ENCODE measurements at regions of chr12 and their contacts with region 1.

Region 1: DNA sequence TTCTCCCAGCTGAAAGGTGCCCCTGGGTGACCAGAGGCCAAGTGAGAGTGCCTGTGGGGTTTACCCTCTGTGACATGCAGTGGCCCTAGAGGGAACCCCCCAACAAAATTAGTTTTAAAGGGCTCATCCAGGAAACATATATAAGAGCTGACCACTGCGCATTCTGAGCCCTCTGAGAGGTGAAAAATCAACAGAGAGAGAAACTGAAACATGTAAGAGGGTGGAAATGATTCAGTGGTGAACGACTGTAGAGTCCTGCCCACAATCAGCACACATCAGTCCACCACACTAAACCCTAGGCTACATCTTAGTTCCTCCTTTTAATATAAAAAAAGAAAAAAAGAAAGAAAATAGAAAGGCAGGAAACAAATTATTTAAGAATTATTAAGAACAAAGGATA is 21.0 kb upstream of the ACSM4 start:
- DNase-seq: no peak
- H3K4me3 ChIP-seq: no peak overlapping the region
- H3K27ac ChIP-seq: no peak overlapping the region
- H3K4me1 ChIP-seq: no peaks in the 10 kb centered on the region
- H3K27me3 ChIP-seq: no peaks in the 10 kb centered on the region
- CTCF ChIP-seq: no peak

Region 2: DNA sequence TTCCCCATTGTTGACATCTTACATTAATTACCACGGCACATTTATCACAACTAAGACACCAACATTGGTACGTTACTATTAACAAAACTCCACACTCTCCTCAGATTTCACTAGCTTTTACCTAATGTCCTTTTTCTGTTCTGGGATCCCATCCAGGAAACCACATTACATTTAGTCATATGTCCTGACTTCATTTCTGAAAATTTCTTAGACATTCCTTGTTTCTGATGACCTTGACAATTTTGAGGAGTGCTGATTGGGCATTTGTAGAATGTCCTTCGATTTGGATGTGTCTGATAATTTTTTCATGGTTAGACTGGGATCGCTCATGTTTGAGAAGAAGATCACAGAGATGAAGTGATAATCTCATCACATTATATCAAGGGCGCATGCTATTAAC is 13.6 kb before region 1 on chr12:
- CTCF ChIA-PET with region 1: no interaction called
- dilution Hi-C with region 1: no loop called
- in situ Hi-C with region 1: no loop called
- intact Hi-C with region 1: loop called (anchors 1 kb)
- DNase-seq: peak; percentile 5
- H3K4me3 ChIP-seq: no peak overlapping the region
- H3K27ac ChIP-seq: no peak overlapping the region
- H3K4me1 ChIP-seq: no peaks in the 10 kb centered on the region
- H3K27me3 ChIP-seq: no peaks in the 10 kb centered on the region
- CTCF ChIP-seq: no peak